Aorta (tissue), 5 donors: ENCODE measurements at regions of chr18 and their contacts with region 1.

Region 1: DNA sequence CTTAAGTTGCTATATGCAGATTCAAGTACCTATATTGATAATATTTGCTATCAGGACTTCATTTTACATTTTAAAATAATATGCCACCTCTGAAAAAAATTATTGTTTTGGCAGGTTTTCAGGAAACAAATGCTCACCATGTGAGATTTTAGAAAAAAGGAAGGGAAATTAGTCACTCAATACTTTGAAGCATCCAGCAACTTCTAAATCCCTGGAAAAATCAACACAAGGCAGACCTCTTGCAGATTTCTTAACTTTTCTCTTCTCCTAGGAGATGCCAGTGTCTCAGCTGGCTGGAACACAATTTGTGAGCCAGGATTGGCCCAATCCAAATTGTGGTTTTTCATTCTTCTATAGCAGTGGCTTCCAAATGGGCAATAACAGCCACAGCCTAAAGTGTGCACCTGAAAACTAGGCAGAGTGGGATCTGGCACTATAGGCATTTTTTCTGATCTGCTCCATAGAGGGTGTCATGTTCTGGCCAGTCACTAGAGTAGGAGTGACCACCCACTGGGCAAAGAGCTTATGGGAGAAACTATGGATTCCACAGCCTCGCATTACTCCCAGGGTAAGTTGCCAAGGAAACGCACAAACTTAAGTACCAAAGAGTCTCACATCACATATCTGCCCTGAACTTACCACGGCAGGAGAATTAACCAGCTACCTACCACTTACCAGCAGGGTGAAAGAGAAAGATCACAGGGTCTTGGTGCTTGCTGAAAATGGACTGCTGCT is 28.1 kb upstream of the THOC1 start:
- DNase-seq: no peak
- ATAC-seq: no peak
- H3K4me3 ChIP-seq: no peak overlapping the region
- H3K27ac ChIP-seq: peak overlapping the region in 1 of 2 donors; percentile 9
- H3K4me1 ChIP-seq: no peaks in the 10 kb centered on the region
- H3K27me3 ChIP-seq: no peaks in the 10 kb centered on the region

Region 2: DNA sequence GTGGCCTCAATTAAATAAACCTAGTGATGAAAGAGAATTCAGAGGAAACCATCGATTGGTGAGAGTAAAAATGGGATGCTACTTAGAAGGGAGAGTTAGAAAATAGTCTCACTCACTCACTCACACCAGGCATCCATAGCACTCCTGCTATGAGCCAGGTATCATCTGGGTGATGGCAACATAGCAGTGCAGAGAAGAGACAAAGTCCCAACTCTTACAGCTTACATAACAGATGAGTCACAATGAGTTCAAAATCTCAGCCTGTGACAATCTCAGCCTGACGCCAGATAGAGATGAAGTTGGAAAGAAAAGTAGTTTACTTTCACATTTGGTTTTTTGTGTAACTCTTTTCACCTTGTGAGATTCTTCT is 27.3 kb after region 1 on chr18:
- intact Hi-C with region 1: no loop called
- DNase-seq: no peak
- ATAC-seq: peak; percentile 24
- H3K4me3 ChIP-seq: no peak overlapping the region
- H3K27ac ChIP-seq: no peak overlapping the region
- H3K4me1 ChIP-seq: no peaks in the 10 kb centered on the region
- H3K27me3 ChIP-seq: no peaks in the 10 kb centered on the region

Region 3: GRCh38 chr18:395456-396250 is 99.7 kb after region 1 on chr18:
- intact Hi-C with region 1: no loop called
- DNase-seq: no peak
- ATAC-seq: peak; percentile 71
- H3K4me3 ChIP-seq: no peak overlapping the region
- H3K27ac ChIP-seq: peak overlapping the region in 1 of 2 donors; percentile 63
- H3K4me1 ChIP-seq: peaks cover 0 to 3% of the 10 kb centered on the region in 2 donors
- H3K27me3 ChIP-seq: no peaks in the 10 kb centered on the region

Region 4: DNA sequence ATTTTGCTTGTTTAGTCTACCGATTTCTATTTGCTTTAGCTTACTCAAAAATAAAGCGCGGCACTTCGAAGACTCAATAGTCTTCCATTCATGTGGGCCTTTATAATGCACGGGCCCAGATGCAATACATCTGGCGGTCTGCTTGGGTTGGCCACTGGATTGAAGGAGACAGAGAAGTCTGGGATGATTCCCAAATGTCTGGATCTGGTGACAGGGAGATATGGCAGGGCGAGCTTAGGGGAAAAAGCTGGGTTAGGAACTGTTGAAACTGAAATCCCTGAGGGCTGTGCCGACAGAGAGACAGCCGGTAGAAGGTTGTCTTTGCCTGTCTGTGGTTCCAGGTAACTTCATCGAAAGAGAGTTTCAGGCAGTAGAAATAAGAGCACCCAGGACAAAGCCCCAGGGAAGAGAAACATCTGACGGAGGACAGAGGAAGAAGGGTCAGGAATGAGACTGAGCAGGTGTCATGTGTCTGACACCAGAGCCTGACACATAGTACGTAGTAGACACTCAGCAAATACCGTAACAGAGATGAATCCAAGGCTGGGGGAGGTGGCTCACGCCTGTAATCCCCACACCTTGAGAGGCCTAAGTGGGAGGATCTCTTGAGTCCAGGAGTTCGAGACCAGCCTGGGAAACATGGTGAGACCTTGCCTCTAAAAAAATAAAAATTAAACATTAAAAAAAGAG is 314.4 kb after region 1 on chr18:
- intact Hi-C with region 1: loop called in 1 of 2 experiments (anchors 5 kb)
- DNase-seq: no peak
- ATAC-seq: no peak
- H3K4me3 ChIP-seq: no peak overlapping the region
- H3K27ac ChIP-seq: no peak overlapping the region
- H3K4me1 ChIP-seq: no peaks in the 10 kb centered on the region
- H3K27me3 ChIP-seq: no peaks in the 10 kb centered on the region